ENCODE measurements at regions of chrX and their contacts with region 1.

Region 1: GRCh38 chrX:101029665-101030064 is 22.2 kb downstream of the TRMT2B start:
- DNase-seq: no peak
- ATAC-seq: no peak
- H3K4me3 ChIP-seq: no peak overlapping the region
- H3K4me3 Mint-ChIP-seq: no peak overlapping the region
- H3K27ac ChIP-seq: no peak overlapping the region
- H3K27ac Mint-ChIP-seq: no peak overlapping the region
- H3K4me1 ChIP-seq: no peaks in the 10 kb centered on the region
- H3K4me1 Mint-ChIP-seq: no peaks in the 10 kb centered on the region
- H3K27me3 ChIP-seq: no peaks in the 10 kb centered on the region
- H3K27me3 Mint-ChIP-seq: no peaks in the 10 kb centered on the region
- CTCF ChIP-seq: no peak

Region 2: GRCh38 chrX:100829730-100830129 is 199.9 kb before region 1 on chrX:
- CTCF ChIA-PET with region 1: no interaction called
- POLR2A ChIA-PET with region 1: no interaction called
- intact Hi-C with region 1: loop called in 1 of 2 experiments (anchors 10 kb)
- DNase-seq: peak in 3 of 14 experiments; percentile 62 to 72 (median 67)
- ATAC-seq: peak; percentile 82
- H3K4me3 ChIP-seq: no peak overlapping the region
- H3K4me3 Mint-ChIP-seq: peak overlapping the region; percentile 70
- H3K27ac ChIP-seq: peak overlapping the region; percentile 21 to 76
- H3K27ac Mint-ChIP-seq: peak overlapping the region; percentile 90
- H3K4me1 ChIP-seq: peaks cover 10% of the 10 kb centered on the region
- H3K4me1 Mint-ChIP-seq: peaks cover 20% of the 10 kb centered on the region
- H3K27me3 ChIP-seq: no peaks in the 10 kb centered on the region
- H3K27me3 Mint-ChIP-seq: no peaks in the 10 kb centered on the region
- CTCF ChIP-seq: no peak

Measured in CD4-positive, alpha-beta T cell (primary cell).